ENCODE measurements at regions of chr5 and their contacts with region 1.

Region 1: GRCh38 chr5:97162045-97162444 is 19.6 kb upstream of the LIX1 start:
- DNase-seq: peak; percentile 65
- ATAC-seq: peak; percentile 80
- H3K4me3 ChIP-seq: no peak overlapping the region
- H3K27ac ChIP-seq: no peak overlapping the region
- H3K4me1 ChIP-seq: peaks cover 7% of the 10 kb centered on the region; the same call in 1 of the 2 replicates
- H3K27me3 ChIP-seq: no peaks in the 10 kb centered on the region
- CTCF ChIP-seq: peak; percentile 83
- EP300 ChIP-seq: no peak
- POLR2A ChIP-seq: no peak
- RAD21 ChIP-seq: peak; percentile 67

Region 2: GRCh38 chr5:96614110-96614691 is 547.8 kb before region 1 on chr5:
- CTCF ChIA-PET with region 1: interaction called, 4 read pairs
- POLR2A ChIA-PET with region 1: no interaction called
- in situ Hi-C with region 1: loop called (anchors 25 kb)
- intact Hi-C with region 1: loop called (anchors 1 kb)
- DNase-seq: peak; percentile 68
- ATAC-seq: peak; percentile 83
- H3K4me3 ChIP-seq: peak overlapping the region in 2 of 3 experiments; percentile 15 to 24; a peak in 1 of 6 replicates
- H3K27ac ChIP-seq: no peak overlapping the region
- H3K4me1 ChIP-seq: peaks cover 21% of the 10 kb centered on the region
- H3K27me3 ChIP-seq: no peaks in the 10 kb centered on the region
- CTCF ChIP-seq: peak; percentile 79
- EP300 ChIP-seq: no peak
- POLR2A ChIP-seq: no peak
- RAD21 ChIP-seq: peak; percentile 70

Region 3: GRCh38 chr5:96807075-96807654 is 354.9 kb before region 1 on chr5:
- CTCF ChIA-PET with region 1: no interaction called
- POLR2A ChIA-PET with region 1: no interaction called
- in situ Hi-C with region 1: no loop called
- intact Hi-C with region 1: loop called (anchors 1 kb)
- DNase-seq: peak; percentile 61
- ATAC-seq: peak; percentile 77
- H3K4me3 ChIP-seq: peak overlapping the region; percentile 86 to 94 (median 90)
- H3K27ac ChIP-seq: peak overlapping the region; percentile 99
- H3K4me1 ChIP-seq: peaks cover 41% of the 10 kb centered on the region
- H3K27me3 ChIP-seq: no peaks in the 10 kb centered on the region
- CTCF ChIP-seq: no peak
- EP300 ChIP-seq: no peak
- POLR2A ChIP-seq: peak; percentile 70 to 71
- RAD21 ChIP-seq: peak; percentile 51

Region 4: DNA sequence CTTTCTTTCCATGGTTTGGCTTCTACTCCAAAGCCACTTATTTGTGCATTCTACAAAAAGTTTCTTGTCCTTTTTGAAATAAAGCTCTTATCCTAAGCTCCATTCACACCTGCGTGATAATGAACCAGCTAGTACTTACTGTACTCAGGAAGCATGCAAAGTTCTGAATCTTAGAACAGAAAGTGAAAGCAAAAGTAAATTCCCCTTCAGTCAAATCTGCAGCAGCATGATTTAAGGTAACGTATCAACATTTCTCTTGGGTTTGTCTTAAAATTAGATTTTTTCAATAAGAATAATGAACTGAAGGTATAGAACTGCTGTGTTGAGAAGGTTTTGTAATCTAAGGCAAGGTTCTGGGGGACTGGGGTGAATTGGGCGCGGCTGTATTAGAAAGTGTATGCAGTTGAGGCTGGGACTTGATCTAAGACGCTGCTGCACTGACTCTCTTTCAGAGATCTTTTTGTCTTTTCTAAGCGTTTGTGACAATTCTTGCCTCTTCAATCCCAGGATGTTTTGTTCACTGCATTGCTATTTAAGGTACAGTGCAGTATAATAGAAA is 285.7 kb before region 1 on chr5 and contains the start of gene ERAP2:
- CTCF ChIA-PET with region 1: no interaction called
- POLR2A ChIA-PET with region 1: no interaction called
- in situ Hi-C with region 1: loop called (anchors 10 kb)
- intact Hi-C with region 1: no loop called
- DNase-seq: peak; percentile 25
- ATAC-seq: peak; percentile 59
- H3K4me3 ChIP-seq: peak within 1 kb of the TSS; percentile 71 to 88 (median 71)
- H3K27ac ChIP-seq: peak within 1 kb of the TSS; percentile 58
- H3K4me1 ChIP-seq: peaks cover 24% of the 10 kb centered on the region
- H3K27me3 ChIP-seq: no peaks in the 10 kb centered on the region
- CTCF ChIP-seq: no peak
- EP300 ChIP-seq: no peak
- POLR2A ChIP-seq: no peak
- RAD21 ChIP-seq: no peak
- total RNA-seq, gene ERAP2: 12.8 and 16.6 TPM in 2 replicates

Region 5: DNA sequence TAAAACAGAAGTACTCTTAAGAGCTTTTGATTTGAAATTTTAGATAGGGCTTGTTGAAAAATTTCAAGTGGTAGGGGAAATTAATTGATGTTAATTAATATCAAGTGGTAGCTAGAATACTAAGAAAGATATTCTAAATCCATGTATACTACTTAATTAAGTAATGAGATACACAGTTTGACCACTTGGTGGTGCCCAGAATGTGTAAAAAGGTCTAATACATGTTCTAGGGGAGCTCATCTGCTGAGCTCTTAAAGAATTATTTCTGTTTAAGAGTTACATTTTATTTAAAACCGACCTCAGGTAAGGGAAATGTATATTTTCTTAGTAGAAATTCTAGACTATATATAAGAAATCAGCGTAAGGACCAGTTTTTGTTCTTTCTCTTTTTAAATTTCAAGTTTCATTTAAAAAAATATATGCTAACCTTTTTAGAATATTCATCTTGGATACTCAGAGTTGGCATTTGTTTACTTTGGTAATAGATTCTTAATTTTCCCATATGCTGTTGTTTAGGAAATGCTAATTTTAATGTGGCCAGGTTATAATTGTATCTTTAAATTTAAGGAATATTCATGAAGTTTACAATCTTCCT is 164.7 kb before region 1 on chr5:
- CTCF ChIA-PET with region 1: interaction called, 24 read pairs
- POLR2A ChIA-PET with region 1: no interaction called
- in situ Hi-C with region 1: no loop called
- intact Hi-C with region 1: loop called (anchors 1 kb)
- DNase-seq: peak; percentile 41
- ATAC-seq: peak; percentile 77
- H3K4me3 ChIP-seq: no peak overlapping the region
- H3K27ac ChIP-seq: no peak overlapping the region
- H3K4me1 ChIP-seq: peaks cover 10% of the 10 kb centered on the region
- H3K27me3 ChIP-seq: no peaks in the 10 kb centered on the region
- CTCF ChIP-seq: peak; percentile 40; the same call in 1 of the 2 replicates
- EP300 ChIP-seq: no peak
- POLR2A ChIP-seq: no peak
- RAD21 ChIP-seq: no peak